ENCODE measurements at regions of chr12 and their contacts with region 1.

Region 1: DNA sequence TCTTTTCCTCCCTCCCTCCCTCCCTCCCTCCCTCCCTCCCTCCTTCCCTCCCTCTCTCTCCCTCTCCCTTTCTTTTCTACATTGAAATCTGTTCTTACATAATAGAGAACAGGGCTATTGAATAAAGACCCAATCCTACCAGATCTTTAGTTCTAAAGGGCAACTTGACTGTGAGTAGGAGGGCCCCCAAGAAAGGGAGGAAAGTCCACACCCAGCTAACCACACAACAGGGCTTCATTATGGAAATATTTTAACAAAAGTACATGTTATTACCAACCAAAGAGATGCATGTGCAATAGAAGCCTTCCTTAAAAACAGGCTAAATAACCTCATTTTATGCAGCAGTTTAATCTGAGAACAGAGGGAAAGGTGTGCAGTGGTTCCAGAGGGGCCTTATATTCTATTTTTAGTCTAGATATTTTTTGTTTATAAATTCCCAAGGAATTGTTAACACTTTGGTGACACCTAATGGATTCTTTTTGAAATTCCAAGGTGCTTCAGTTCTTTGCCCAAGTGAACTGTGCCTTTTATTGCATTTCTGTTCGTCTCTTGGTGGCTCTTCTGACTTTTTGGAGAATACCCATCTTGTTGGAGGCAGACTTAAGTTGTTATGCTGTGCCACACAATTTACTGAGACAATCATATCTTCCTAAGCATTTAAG is 63.0 kb downstream of the GNS start:
- DNase-seq: no peak
- H3K4me3 ChIP-seq: no peak overlapping the region
- H3K27me3 ChIP-seq: no peaks in the 10 kb centered on the region
- CTCF ChIP-seq: peak; percentile 27; the same call in 1 of the 2 replicates

Region 2: DNA sequence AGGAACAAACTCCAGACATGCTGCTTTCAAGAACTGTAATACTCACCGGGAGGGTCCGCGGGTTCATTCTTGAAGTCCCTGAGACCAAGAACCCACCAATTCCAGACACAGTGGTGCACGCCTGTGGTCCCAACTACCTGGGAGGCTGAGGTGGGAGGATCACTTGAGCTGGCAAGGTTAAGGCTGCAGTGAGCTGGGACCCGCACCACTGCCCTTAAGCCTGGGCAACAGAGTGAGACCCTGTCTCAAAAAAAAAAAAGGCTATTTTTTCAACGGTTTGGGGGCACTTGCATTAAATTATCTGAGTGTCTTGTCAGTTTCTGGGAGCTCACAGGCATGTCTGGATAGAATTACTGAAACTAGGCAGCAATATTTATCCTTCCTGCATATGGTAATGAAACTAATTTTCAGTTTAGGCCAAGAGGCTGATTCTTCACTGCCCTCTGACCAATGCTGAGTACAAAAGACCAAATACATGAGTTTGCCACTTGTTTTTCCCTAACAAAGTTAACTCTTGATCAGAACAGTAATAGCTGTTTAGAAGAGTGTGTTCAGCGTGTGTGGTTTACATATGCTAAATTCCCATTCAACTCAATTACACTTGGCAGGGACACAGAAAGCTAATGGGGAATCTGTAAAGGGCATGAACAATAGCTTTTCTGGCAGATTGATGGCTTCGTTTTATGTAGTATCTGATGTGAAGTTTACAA is 151.7 kb before region 1 on chr12:
- CTCF ChIA-PET with region 1: interaction called, 167 read pairs
- POLR2A ChIA-PET with region 1: interaction called, 3 read pairs
- DNase-seq: no peak
- H3K4me3 ChIP-seq: no peak overlapping the region
- H3K27me3 ChIP-seq: no peaks in the 10 kb centered on the region; the same call in 1 of the 2 replicates
- CTCF ChIP-seq: no peak

Region 3: GRCh38 chr12:64551698-64552097 is 144.5 kb before region 1 on chr12:
- CTCF ChIA-PET with region 1: interaction called, 167 read pairs
- POLR2A ChIA-PET with region 1: interaction called, 3 read pairs
- DNase-seq: peak; percentile 48
- H3K4me3 ChIP-seq: no peak overlapping the region
- H3K27me3 ChIP-seq: peaks cover 8% of the 10 kb centered on the region
- CTCF ChIP-seq: no peak

Region 4: GRCh38 chr12:64560396-64561304 is 135.6 kb before region 1 on chr12:
- CTCF ChIA-PET with region 1: interaction called, 16 read pairs
- POLR2A ChIA-PET with region 1: no interaction called
- DNase-seq: peak; percentile 98
- H3K4me3 ChIP-seq: no peak overlapping the region
- H3K27me3 ChIP-seq: peaks cover 10% of the 10 kb centered on the region
- CTCF ChIP-seq: no peak

Region 5: GRCh38 chr12:64706306-64706705 is 10.1 kb after region 1 on chr12:
- CTCF ChIA-PET with region 1: interaction called, 12 read pairs
- POLR2A ChIA-PET with region 1: no interaction called
- DNase-seq: no peak
- H3K4me3 ChIP-seq: no peak overlapping the region
- H3K27me3 ChIP-seq: no peaks in the 10 kb centered on the region
- CTCF ChIP-seq: no peak

Measured in BJ (cell line).